AG04450 (cell line): ENCODE measurements at regions of chr19 and their contacts with region 1.

Region 1: GRCh38 chr19:506404-507285 is 652 bp upstream of the TPGS1 start:
- DNase-seq: peak; percentile 75
- H3K4me3 ChIP-seq: peak overlapping the region; percentile 87
- H3K27ac ChIP-seq: peak overlapping the region; percentile 88
- H3K27me3 ChIP-seq: no peaks in the 10 kb centered on the region
- CTCF ChIP-seq: peak; percentile 96

Region 2: DNA sequence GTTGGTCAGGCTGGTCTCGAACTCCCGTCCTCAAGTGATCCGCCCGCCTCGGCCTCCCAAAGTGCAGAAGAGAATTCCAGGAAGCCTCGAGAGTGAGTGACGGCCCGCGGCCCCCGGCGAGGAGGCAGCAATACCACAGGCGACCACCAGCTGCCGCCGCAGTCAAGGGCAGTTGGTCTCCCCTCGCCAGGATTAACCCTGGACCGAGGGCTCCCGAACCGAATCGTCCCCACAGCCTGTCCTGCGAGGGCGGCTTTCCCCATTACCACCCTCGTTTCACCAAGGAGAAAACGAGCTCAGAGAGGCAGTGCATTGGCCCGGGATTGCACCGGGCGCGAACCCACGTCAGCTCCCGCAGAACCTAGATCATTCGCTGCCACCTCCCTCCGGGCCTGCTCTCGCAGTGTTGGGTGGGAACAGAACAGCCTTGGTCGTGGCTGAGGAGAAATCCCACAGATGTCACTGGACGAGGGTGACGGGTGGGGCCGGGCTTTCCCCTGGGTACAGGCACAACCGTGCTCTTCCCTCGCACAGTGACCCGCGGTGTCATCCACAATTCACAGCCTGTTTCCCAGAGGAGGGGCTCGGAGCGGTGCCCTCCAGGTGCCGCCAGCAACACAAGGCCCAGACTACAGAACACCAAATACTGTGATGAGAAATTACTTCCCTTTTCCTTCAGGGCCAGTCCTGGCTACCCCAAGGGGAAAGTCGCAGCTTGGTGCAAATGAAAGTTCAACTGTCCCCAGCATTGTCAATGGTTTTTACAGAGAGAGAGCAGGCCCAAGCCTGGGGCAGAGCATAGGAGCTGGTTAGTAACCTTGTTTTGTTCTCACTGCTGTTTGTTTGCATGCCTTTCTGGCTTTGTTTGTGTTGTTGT is 122.5 kb before region 1 on chr19:
- CTCF ChIA-PET with region 1: interaction called, 12 read pairs
- POLR2A ChIA-PET with region 1: interaction called, 7 read pairs
- DNase-seq: no peak
- H3K4me3 ChIP-seq: no peak overlapping the region
- H3K27ac ChIP-seq: no peak overlapping the region
- H3K27me3 ChIP-seq: peaks cover 2% of the 10 kb centered on the region
- CTCF ChIP-seq: peak; percentile 39; the same call in 1 of the 2 replicates

Region 3: DNA sequence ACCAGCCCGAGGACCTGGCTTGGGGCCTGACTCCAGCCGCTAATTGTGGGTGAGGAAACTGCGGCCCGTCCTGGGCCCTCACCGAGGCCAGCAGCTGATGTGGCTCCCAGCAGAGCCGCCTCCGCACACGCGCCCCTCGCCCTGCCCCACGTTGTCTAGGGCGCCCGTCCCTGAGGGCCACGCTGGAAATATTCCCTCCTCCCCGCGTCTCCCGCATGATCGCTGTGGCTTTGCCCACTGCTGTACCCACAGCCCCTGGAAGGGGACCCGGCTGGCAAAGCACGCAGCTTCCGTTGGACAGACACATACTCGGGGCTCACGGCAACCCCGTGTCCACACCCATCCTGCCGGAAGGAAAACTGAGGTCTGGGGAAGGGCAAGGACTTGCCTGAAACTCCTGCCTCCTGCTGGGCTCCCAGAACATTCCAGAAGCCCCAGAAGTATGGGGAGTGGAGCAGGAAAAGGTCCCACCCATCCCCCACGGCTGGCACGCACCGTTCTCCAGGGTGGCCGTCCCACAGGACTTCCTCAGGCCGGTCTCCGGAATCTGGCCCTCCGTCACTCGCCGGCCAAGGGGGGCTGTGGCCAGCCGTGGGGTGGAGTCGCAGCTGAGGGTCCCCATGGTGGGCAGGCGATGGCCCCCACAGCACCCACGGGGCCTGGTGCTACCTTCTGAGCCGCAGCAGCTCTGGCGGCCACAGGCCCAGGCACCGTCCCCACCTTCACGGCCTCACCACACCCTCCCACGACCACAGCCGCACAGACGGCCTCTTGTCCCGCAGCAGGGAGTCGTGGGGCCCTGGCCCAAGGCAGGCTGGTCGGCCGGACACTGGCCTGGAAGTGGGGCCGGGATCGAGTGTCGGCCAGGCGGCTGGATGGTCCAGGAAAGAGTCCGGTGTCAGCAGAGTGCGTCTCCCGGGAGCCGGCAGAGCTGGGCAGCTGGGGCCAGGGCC is 32.2 kb before region 1 on chr19:
- CTCF ChIA-PET with region 1: no interaction called
- POLR2A ChIA-PET with region 1: no interaction called
- DNase-seq: no peak
- H3K4me3 ChIP-seq: no peak overlapping the region
- H3K27ac ChIP-seq: no peak overlapping the region
- H3K27me3 ChIP-seq: peaks cover 8% of the 10 kb centered on the region
- CTCF ChIP-seq: no peak

Region 4: GRCh38 chr19:495402-496186 is 11.1 kb before region 1 on chr19:
- CTCF ChIA-PET with region 1: interaction called, 16 read pairs
- POLR2A ChIA-PET with region 1: interaction called, 4 read pairs
- DNase-seq: no peak
- H3K4me3 ChIP-seq: no peak overlapping the region
- H3K27ac ChIP-seq: no peak overlapping the region
- H3K27me3 ChIP-seq: peaks cover 22% of the 10 kb centered on the region
- CTCF ChIP-seq: peak; percentile 68

Region 5: GRCh38 chr19:518603-519231 is 12.1 kb after region 1 on chr19:
- CTCF ChIA-PET with region 1: interaction called, 12 read pairs
- POLR2A ChIA-PET with region 1: no interaction called
- DNase-seq: no peak
- H3K4me3 ChIP-seq: no peak overlapping the region
- H3K27ac ChIP-seq: no peak overlapping the region
- H3K27me3 ChIP-seq: no peaks in the 10 kb centered on the region
- CTCF ChIP-seq: no peak

Region 6: GRCh38 chr19:531009-531752 is 24.5 kb after region 1 on chr19:
- CTCF ChIA-PET with region 1: interaction called, 29 read pairs
- POLR2A ChIA-PET with region 1: interaction called, 5 read pairs
- DNase-seq: peak; percentile 47
- H3K4me3 ChIP-seq: peak overlapping the region; percentile 82
- H3K27ac ChIP-seq: peak overlapping the region; percentile 57
- H3K27me3 ChIP-seq: peaks cover 3% of the 10 kb centered on the region
- CTCF ChIP-seq: no peak